H1 (cell line): ENCODE measurements at regions of chr4 and their contacts with region 1.

Region 1: GRCh38 chr4:156968479-156968984 is 3.1 kb downstream of the PDGFC start:
- DNase-seq: peak in 1 of 2 experiments; percentile 72
- H3K4me3 ChIP-seq: no peak overlapping the region
- H3K27ac ChIP-seq: no peak overlapping the region
- H3K4me1 ChIP-seq: peaks cover 3 to 16% (median 7%) of the 10 kb centered on the region in 4 experiments; a peak in 6 of 7 replicates
- H3K27me3 ChIP-seq: peaks cover 0 to 5% (median 2%) of the 10 kb centered on the region in 4 experiments; a peak in 3 of 7 replicates
- CTCF ChIP-seq: peak in 2 of 3 experiments; percentile 66 to 80; a peak in 3 of 4 replicates
- EP300 ChIP-seq: no peak
- POLR2A ChIP-seq: no peak
- RAD21 ChIP-seq: peak; percentile 80 to 85

Region 2: GRCh38 chr4:156169011-156169410 is 799.5 kb before region 1 on chr4:
- CTCF ChIA-PET with region 1: interaction called, 21 read pairs
- POLR2A ChIA-PET with region 1: no interaction called
- DNase-seq: peak; percentile 17 to 46
- H3K4me3 ChIP-seq: no peak overlapping the region
- H3K27ac ChIP-seq: no peak overlapping the region
- H3K4me1 ChIP-seq: peaks cover 0 to 2% (median 0%) of the 10 kb centered on the region in 4 experiments; a peak in 1 of 7 replicates
- H3K27me3 ChIP-seq: no peaks in the 10 kb centered on the region
- CTCF ChIP-seq: peak in 2 of 3 experiments; percentile 65 to 76; a peak in 3 of 4 replicates
- EP300 ChIP-seq: no peak
- POLR2A ChIP-seq: no peak
- RAD21 ChIP-seq: peak; percentile 88 to 91

Region 3: GRCh38 chr4:156475322-156475721 is 493.2 kb before region 1 on chr4:
- CTCF ChIA-PET with region 1: interaction called, 14 read pairs
- POLR2A ChIA-PET with region 1: no interaction called
- DNase-seq: no peak
- H3K4me3 ChIP-seq: no peak overlapping the region
- H3K27ac ChIP-seq: no peak overlapping the region
- H3K4me1 ChIP-seq: no peaks in the 10 kb centered on the region
- H3K27me3 ChIP-seq: no peaks in the 10 kb centered on the region
- CTCF ChIP-seq: peak in 2 of 3 experiments; percentile 21 to 39; a peak in 2 of 4 replicates
- EP300 ChIP-seq: no peak
- POLR2A ChIP-seq: no peak
- RAD21 ChIP-seq: peak; percentile 67 to 71

Region 4: DNA sequence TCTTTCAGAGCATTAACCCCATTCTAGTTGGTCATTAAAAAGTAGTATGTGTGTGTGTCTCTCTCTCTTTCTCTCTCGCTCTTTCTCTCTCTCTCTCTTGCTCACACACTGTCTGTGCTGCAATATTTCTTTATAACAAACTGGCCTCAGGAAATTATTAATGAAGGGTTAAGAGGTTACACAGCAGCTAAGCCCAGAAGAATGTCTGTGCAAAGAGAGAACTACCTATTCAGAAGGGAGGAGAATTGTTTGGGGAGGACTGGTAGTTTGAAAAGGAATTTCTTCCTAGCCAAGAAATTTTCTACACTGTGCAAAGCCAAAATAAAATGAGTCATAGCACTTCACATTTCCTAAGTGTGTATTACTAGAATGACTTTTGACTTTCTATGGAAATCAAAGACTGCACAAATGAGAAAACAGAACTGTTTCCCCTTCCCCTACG is 19.1 kb before region 1 on chr4:
- CTCF ChIA-PET with region 1: interaction called, 12 read pairs
- POLR2A ChIA-PET with region 1: no interaction called
- DNase-seq: no peak
- H3K4me3 ChIP-seq: no peak overlapping the region
- H3K27ac ChIP-seq: no peak overlapping the region
- H3K4me1 ChIP-seq: peaks cover 0 to 4% (median 0%) of the 10 kb centered on the region in 4 experiments; a peak in 1 of 7 replicates
- H3K27me3 ChIP-seq: no peaks in the 10 kb centered on the region
- CTCF ChIP-seq: no peak
- EP300 ChIP-seq: no peak
- POLR2A ChIP-seq: no peak
- RAD21 ChIP-seq: no peak

Region 5: DNA sequence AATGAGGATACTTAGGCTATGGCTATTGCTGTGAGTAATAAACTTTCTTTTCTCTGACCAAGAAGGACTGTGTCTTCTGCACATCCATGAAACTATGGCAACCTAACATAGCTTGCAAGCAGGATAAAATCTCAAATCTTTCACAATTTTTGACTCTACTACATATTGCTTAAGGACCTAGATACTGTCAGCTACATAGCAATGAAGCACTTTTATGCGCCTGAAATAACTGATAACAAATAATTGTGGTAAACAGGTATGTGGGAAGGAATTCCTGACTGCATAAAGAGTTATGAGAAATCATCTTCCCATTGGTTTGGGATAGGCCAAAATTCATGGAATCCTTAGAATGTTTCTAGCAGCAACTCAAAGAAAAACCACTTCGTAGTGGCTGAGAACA is 44.2 kb after region 1 on chr4:
- CTCF ChIA-PET with region 1: no interaction called
- POLR2A ChIA-PET with region 1: no interaction called
- DNase-seq: no peak
- H3K4me3 ChIP-seq: no peak overlapping the region
- H3K27ac ChIP-seq: no peak overlapping the region
- H3K4me1 ChIP-seq: peaks cover 4 to 8% (median 5%) of the 10 kb centered on the region in 4 experiments; a peak in 4 of 7 replicates
- H3K27me3 ChIP-seq: peaks cover 0 to 1% (median 0%) of the 10 kb centered on the region in 4 experiments; a peak in 1 of 7 replicates
- CTCF ChIP-seq: no peak
- EP300 ChIP-seq: no peak
- POLR2A ChIP-seq: no peak
- RAD21 ChIP-seq: no peak

Region 6: GRCh38 chr4:157045507-157046127 is 77.1 kb after region 1 on chr4:
- CTCF ChIA-PET with region 1: interaction called, 12 read pairs
- POLR2A ChIA-PET with region 1: no interaction called
- DNase-seq: no peak
- H3K4me3 ChIP-seq: no peak overlapping the region
- H3K27ac ChIP-seq: no peak overlapping the region
- H3K4me1 ChIP-seq: no peaks in the 10 kb centered on the region
- H3K27me3 ChIP-seq: no peaks in the 10 kb centered on the region
- CTCF ChIP-seq: peak; percentile 26 to 91 (median 73)
- EP300 ChIP-seq: no peak
- POLR2A ChIP-seq: no peak
- RAD21 ChIP-seq: peak; percentile 81 to 85